Activated CD4-positive, alpha-beta T cell treated with anti-CD3 and anti-CD28 coated beads for 36 hours (primary cell): ENCODE measurements at regions of chr21 and their contacts with region 1.

Region 1: GRCh38 chr21:43659136-43660000 is at the starts of genes HSF2BP and RRP1B:
- DNase-seq: peak; percentile 89
- ATAC-seq: peak; percentile 89
- H3K4me3 Mint-ChIP-seq: peak within 1 kb of the TSS; percentile 94
- H3K27ac Mint-ChIP-seq: peak within 1 kb of the TSS; percentile 93
- H3K4me1 Mint-ChIP-seq: peaks cover 43% of the 10 kb centered on the region
- H3K27me3 Mint-ChIP-seq: no peaks in the 10 kb centered on the region
- total RNA-seq, gene HSF2BP: 1.5 to 1.6 TPM
- total RNA-seq, gene RRP1B: 64.0 to 66.7 TPM

Region 2: GRCh38 chr21:42892931-42893755 is 766.2 kb before region 1 on chr21 and contains the start of gene NDUFV3:
- CTCF ChIA-PET with region 1: no interaction called
- POLR2A ChIA-PET with region 1: no interaction called
- intact Hi-C with region 1: loop called in 1 of 2 experiments (anchors 1 kb)
- DNase-seq: peak; percentile 100
- ATAC-seq: peak; percentile 97
- H3K4me3 Mint-ChIP-seq: peak within 1 kb of the TSS; percentile 74
- H3K27ac Mint-ChIP-seq: peak within 1 kb of the TSS; percentile 90
- H3K4me1 Mint-ChIP-seq: peaks cover 13% of the 10 kb centered on the region
- H3K27me3 Mint-ChIP-seq: no peaks in the 10 kb centered on the region
- total RNA-seq, gene NDUFV3: 24.6 to 31.8 TPM

Region 3: GRCh38 chr21:43318841-43319781 is 340.3 kb before region 1 on chr21:
- CTCF ChIA-PET with region 1: no interaction called
- POLR2A ChIA-PET with region 1: no interaction called
- intact Hi-C with region 1: loop called in 1 of 2 experiments (anchors 10 kb)
- DNase-seq: no peak
- ATAC-seq: no peak
- H3K4me3 Mint-ChIP-seq: no peak overlapping the region
- H3K27ac Mint-ChIP-seq: no peak overlapping the region
- H3K4me1 Mint-ChIP-seq: no peaks in the 10 kb centered on the region
- H3K27me3 Mint-ChIP-seq: peaks cover 7% of the 10 kb centered on the region

Region 4: DNA sequence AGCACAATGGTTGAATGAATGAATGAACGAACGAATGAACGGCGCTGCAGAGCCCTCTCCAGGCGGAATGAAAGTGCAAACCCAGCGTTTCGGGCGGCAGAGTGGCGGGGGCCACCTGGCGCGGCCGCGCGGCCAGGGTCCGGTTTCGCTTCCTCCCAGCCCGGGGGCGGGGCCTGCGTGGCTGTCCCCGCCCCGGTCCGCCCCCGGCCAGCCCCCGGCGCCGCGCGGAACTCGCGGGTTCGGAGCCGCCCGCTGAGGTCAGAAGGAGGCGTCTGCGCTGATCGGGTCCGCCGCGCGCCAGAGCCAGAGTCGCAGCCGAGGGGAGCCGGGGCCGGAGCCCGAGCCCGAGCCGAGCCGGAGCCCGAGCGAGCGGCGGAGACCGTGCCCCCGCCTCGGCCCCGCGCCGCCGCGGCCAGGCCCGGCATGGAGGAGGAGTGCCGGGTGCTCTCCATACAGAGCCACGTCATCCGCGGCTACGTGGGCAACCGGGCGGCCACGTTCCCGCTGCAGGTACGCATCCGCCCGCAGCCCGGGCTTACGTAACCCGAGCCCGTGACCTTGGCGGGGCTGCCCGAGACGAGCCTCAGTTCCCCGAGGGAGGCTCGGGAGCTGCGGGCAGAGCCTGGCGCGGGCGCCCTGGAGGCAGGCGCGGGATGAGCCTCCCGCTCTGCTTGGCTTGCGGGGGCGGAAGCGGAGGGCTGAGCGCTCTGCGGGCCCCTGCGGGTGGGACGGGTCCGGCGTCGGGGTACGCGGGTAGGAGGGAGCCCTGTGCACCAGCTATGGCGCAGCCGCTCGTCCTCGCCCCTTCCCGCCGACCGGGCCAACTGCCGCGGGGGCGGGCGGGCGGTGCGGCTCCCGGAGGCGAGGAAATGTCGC is 59.7 kb after region 1 on chr21 and contains the start of gene PDXK:
- CTCF ChIA-PET with region 1: no interaction called
- POLR2A ChIA-PET with region 1: no interaction called
- intact Hi-C with region 1: loop called in 1 of 2 experiments (anchors 1 kb)
- DNase-seq: peak; percentile 86
- ATAC-seq: peak; percentile 82
- H3K4me3 Mint-ChIP-seq: peak within 1 kb of the TSS; percentile 82
- H3K27ac Mint-ChIP-seq: peak within 1 kb of the TSS; percentile 74
- H3K4me1 Mint-ChIP-seq: peaks cover 27% of the 10 kb centered on the region
- H3K27me3 Mint-ChIP-seq: no peaks in the 10 kb centered on the region
- total RNA-seq, gene PDXK: 96.9 to 117 TPM

Region 5: GRCh38 chr21:43775795-43776430 is 116.5 kb after region 1 on chr21 and contains the start of gene CSTB:
- CTCF ChIA-PET with region 1: no interaction called
- POLR2A ChIA-PET with region 1: no interaction called
- intact Hi-C with region 1: loop called in 1 of 2 experiments (anchors 2 kb)
- DNase-seq: peak; percentile 90
- ATAC-seq: peak; percentile 72
- H3K4me3 Mint-ChIP-seq: peak within 1 kb of the TSS; percentile 88
- H3K27ac Mint-ChIP-seq: peak within 1 kb of the TSS; percentile 74
- H3K4me1 Mint-ChIP-seq: peaks cover 40% of the 10 kb centered on the region
- H3K27me3 Mint-ChIP-seq: no peaks in the 10 kb centered on the region
- total RNA-seq, gene CSTB: 29.9 to 30.9 TPM